ENCODE measurements at regions of chr12 and their contacts with region 1.

Region 1: GRCh38 chr12:107685360-107686248 is at the start of gene PWP1:
- DNase-seq: peak; percentile 98
- ATAC-seq: peak; percentile 83
- H3K4me3 ChIP-seq: peak within 1 kb of the TSS; percentile 92
- H3K27ac ChIP-seq: peak within 1 kb of the TSS; percentile 66
- H3K4me1 ChIP-seq: peaks cover 24% of the 10 kb centered on the region
- H3K27me3 ChIP-seq: no peaks in the 10 kb centered on the region
- CTCF ChIP-seq: no peak
- total RNA-seq, gene PWP1: 85.8 and 189 TPM in 2 replicates

Region 2: DNA sequence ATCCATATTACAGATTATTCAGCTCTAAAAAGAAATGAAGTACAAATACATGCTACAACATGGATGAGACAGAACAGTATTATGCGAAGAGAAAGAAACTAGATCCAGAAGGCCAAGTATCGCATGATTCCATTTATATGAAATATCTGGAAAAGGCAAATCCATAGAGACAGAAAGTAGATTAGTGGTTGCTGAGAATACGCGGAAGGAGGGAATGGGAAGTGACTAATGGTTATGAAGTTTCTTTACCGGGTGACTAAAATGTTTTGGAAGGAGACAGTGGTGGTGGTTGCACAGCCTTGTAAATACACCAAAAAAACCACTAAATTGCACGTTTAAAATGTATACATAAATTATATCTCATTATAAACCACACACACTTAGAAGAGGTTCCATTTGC is 62.9 kb after region 1 on chr12:
- CTCF ChIA-PET with region 1: interaction called, 3 read pairs
- POLR2A ChIA-PET with region 1: no interaction called
- intact Hi-C with region 1: loop called (anchors 1 kb)
- DNase-seq: peak; percentile 91
- ATAC-seq: peak; percentile 80
- H3K4me3 ChIP-seq: peak overlapping the region; percentile 46
- H3K27ac ChIP-seq: peak overlapping the region; percentile 76
- H3K4me1 ChIP-seq: peaks cover 56% of the 10 kb centered on the region
- H3K27me3 ChIP-seq: no peaks in the 10 kb centered on the region
- CTCF ChIP-seq: no peak

Region 3: GRCh38 chr12:107760809-107761501 is 75.4 kb after region 1 on chr12 and contains the start of gene PRDM4:
- CTCF ChIA-PET with region 1: no interaction called
- POLR2A ChIA-PET with region 1: interaction called, 4 read pairs
- intact Hi-C with region 1: loop called (anchors 2 kb)
- DNase-seq: peak; percentile 98
- ATAC-seq: peak; percentile 93
- H3K4me3 ChIP-seq: peak within 1 kb of the TSS; percentile 80
- H3K27ac ChIP-seq: peak within 1 kb of the TSS; percentile 57; the same call in 1 of the 2 replicates
- H3K4me1 ChIP-seq: peaks cover 17% of the 10 kb centered on the region
- H3K27me3 ChIP-seq: no peaks in the 10 kb centered on the region
- CTCF ChIP-seq: peak; percentile 36; the same call in 1 of the 2 replicates
- total RNA-seq, gene PRDM4: 22.6 and 33.2 TPM in 2 replicates

Region 4: DNA sequence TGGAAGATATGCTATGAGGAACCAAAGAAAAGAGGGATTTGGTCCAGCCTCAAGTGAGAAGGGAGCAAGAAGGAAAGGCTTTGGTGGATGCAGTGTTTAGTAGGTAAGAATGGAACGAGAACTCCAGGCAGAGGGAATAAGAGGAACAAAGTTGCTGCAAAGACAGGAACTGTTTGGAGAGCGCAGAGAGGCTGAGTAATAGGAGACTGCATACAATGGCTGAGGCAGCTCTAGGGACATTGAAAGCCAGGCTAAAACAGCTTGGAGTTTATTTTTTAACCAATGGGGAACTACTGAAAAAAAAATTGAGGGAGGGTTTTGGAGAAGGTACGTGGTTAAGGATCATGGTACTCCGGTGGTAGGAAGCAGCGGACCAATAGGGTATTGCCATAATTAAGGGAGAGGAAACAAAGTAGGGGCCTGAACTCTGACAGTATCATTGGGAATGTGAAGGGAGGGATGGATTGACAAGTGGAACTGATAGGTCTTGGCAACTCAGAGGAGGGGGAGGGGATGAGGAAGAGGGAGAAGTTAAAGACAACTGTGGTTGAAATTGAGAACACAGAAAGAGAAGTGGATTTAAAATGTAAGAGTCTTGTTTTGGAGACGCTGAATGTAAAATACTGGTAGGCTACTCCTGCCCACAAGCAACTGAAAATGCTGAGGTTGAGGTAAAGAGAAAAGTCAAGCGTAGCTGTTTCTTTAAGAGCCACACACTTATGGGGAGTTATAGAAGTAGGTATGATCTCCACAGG is 93.7 kb after region 1 on chr12:
- CTCF ChIA-PET with region 1: interaction called, 11 read pairs
- POLR2A ChIA-PET with region 1: no interaction called
- intact Hi-C with region 1: no loop called
- DNase-seq: no peak
- ATAC-seq: no peak
- H3K4me3 ChIP-seq: no peak overlapping the region
- H3K27ac ChIP-seq: no peak overlapping the region
- H3K4me1 ChIP-seq: no peaks in the 10 kb centered on the region
- H3K27me3 ChIP-seq: peaks cover 83% of the 10 kb centered on the region
- CTCF ChIP-seq: no peak